HepG2 (cell line): ENCODE measurements at regions of chr11 and their contacts with region 1.

Region 1: GRCh38 chr11:17760102-17761029 is 25.8 kb downstream of the KCNC1 start:
- DNase-seq: peak; percentile 69
- ATAC-seq: peak; percentile 99
- H3K4me3 ChIP-seq: no peak overlapping the region
- H3K27ac ChIP-seq: no peak overlapping the region
- H3K4me1 ChIP-seq: peaks cover 11% of the 10 kb centered on the region; the same call in 1 of the 2 replicates
- H3K27me3 ChIP-seq: peaks cover 3 to 6% of the 10 kb centered on the region in 2 experiments; a peak in 3 of 5 replicates
- CTCF ChIP-seq: peak; percentile 98
- EP300 ChIP-seq: no peak
- POLR2A ChIP-seq: no peak
- RAD21 ChIP-seq: peak; percentile 96

Region 2: DNA sequence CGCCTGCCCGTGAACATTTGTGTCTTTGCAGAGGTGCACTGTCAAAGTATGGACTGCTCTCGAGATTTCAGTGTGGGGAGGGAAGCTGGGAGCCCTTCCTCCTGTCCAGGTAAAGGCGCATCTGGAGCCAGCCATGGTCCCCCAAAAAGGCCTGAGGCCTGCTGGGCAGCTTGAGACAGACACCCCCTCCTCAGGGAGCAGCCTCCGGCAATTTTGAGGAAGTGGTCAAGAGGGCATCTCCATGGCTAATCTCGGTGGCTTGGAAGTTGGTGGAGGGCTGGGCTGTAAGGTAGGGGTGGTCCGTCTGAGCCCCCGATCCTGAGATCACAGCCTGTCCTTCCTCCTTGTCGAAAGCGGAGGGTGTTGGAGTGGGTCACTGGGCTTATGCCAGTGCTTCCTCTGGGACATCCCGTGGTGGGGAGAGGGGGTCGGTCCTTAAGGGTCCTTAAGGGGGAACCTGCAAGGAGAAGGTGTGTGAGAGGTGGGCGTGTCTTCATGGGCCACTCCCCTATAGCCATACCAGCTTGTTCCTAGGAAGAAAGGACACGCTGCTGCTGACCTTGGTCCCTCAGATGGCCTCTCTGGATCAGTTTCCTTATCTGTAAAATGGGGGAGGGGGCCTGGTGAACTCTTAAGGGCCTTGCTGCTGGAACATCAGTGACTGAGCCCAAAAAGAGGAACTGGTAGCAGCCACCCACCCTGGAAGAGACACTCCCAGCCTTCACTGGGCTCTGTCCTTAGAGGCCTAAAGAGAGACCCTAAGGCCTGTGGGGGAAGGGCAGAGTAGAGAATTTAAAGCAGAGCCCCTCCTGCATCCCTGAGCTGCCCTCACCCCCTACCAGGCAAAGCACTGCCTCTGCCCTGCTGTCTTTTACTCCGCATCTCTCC is 23.2 kb before region 1 on chr11:
- CTCF ChIA-PET with region 1: no interaction called
- POLR2A ChIA-PET with region 1: no interaction called
- in situ Hi-C with region 1: no loop called
- intact Hi-C with region 1: no loop called
- DNase-seq: no peak
- ATAC-seq: no peak
- H3K4me3 ChIP-seq: no peak overlapping the region
- H3K27ac ChIP-seq: no peak overlapping the region
- H3K4me1 ChIP-seq: peaks cover 2% of the 10 kb centered on the region
- H3K27me3 ChIP-seq: peaks cover 6 to 38% of the 10 kb centered on the region in 2 experiments; a peak in 3 of 5 replicates
- CTCF ChIP-seq: no peak
- EP300 ChIP-seq: no peak
- POLR2A ChIP-seq: no peak
- RAD21 ChIP-seq: no peak

Region 3: DNA sequence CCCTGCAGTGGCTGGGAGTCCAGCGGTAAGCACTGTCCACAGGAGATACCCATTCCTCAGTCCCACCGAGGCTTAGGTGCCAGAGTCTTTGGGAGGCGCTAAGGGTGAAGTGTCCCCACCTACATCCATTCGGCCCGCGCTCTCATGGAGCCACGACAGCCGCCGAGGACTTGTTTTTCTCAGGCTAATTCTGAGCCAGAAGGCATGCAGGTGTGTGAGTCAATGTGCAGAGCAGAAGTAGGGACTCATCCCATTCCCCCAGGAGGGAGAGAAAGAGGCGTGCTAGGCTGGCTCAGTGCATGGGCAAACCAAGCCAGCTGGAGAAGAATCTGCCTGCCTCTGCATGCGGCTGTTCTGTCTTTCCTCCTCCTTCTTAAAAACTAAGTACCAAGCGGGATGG is 20.9 kb after region 1 on chr11:
- CTCF ChIA-PET with region 1: interaction called, 11 read pairs
- POLR2A ChIA-PET with region 1: no interaction called
- in situ Hi-C with region 1: no loop called
- intact Hi-C with region 1: no loop called
- DNase-seq: no peak
- ATAC-seq: no peak
- H3K4me3 ChIP-seq: no peak overlapping the region
- H3K27ac ChIP-seq: no peak overlapping the region
- H3K4me1 ChIP-seq: no peaks in the 10 kb centered on the region
- H3K27me3 ChIP-seq: peaks cover 0 to 1% of the 10 kb centered on the region in 2 experiments; a peak in 1 of 5 replicates
- CTCF ChIP-seq: no peak
- EP300 ChIP-seq: no peak
- POLR2A ChIP-seq: no peak
- RAD21 ChIP-seq: no peak

Region 4: GRCh38 chr11:17846852-17847453 is 86.6 kb after region 1 on chr11:
- CTCF ChIA-PET with region 1: interaction called, 3 read pairs
- POLR2A ChIA-PET with region 1: no interaction called
- in situ Hi-C with region 1: no loop called
- intact Hi-C with region 1: loop called (anchors 5 kb)
- DNase-seq: no peak
- ATAC-seq: peak; percentile 62
- H3K4me3 ChIP-seq: no peak overlapping the region
- H3K27ac ChIP-seq: no peak overlapping the region
- H3K4me1 ChIP-seq: no peaks in the 10 kb centered on the region
- H3K27me3 ChIP-seq: no peaks in the 10 kb centered on the region
- CTCF ChIP-seq: peak; percentile 39
- EP300 ChIP-seq: no peak
- POLR2A ChIP-seq: no peak
- RAD21 ChIP-seq: no peak

Region 5: GRCh38 chr11:17939542-17939941 is 179.2 kb after region 1 on chr11:
- CTCF ChIA-PET with region 1: no interaction called
- POLR2A ChIA-PET with region 1: no interaction called
- in situ Hi-C with region 1: no loop called
- intact Hi-C with region 1: no loop called
- DNase-seq: no peak
- ATAC-seq: no peak
- H3K4me3 ChIP-seq: no peak overlapping the region
- H3K27ac ChIP-seq: no peak overlapping the region
- H3K4me1 ChIP-seq: peaks cover 2% of the 10 kb centered on the region; the same call in 1 of the 2 replicates
- H3K27me3 ChIP-seq: no peaks in the 10 kb centered on the region
- CTCF ChIP-seq: no peak
- EP300 ChIP-seq: no peak
- POLR2A ChIP-seq: no peak
- RAD21 ChIP-seq: no peak

Region 6: DNA sequence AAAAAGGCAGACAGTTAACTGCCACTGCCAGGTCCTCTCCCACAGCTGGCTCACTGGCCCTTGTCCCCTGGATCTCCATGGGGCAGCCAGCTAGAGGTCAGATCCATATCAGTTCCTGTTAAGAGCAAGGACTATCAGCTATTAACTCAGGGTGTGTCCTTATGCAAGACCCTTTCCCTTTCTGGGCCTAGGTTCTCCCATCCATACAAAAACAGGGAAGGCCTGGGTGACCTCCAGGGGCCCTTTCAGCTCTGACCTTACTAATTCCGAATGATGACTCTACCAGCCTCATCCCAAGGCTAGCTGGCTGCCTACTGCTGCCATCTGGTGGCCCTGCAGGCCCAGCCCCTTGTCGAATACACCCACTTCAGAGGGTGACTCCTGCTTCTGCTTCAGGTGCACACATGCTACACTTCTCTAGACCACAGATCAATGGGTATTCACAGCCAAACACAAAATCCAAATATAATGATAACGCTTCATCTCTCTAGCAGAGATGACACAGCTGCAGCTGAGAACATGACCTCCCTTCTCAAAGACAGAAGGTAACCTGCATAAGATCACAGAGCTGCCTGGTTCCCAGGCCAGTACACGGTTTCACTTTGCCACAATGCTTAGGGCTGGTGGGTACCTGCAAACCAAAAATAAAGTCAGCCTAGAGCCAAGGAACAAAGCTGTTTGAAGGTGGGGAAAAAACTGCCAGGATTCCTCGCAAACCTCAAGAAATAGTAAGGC is 218.4 kb after region 1 on chr11:
- CTCF ChIA-PET with region 1: interaction called, 44 read pairs
- POLR2A ChIA-PET with region 1: no interaction called
- in situ Hi-C with region 1: loop called (anchors 5 kb)
- intact Hi-C with region 1: loop called (anchors 1 kb)
- DNase-seq: peak; percentile 59
- ATAC-seq: peak; percentile 95
- H3K4me3 ChIP-seq: no peak overlapping the region
- H3K27ac ChIP-seq: no peak overlapping the region
- H3K4me1 ChIP-seq: peaks cover 40% of the 10 kb centered on the region
- H3K27me3 ChIP-seq: no peaks in the 10 kb centered on the region
- CTCF ChIP-seq: peak; percentile 90
- EP300 ChIP-seq: no peak
- POLR2A ChIP-seq: no peak
- RAD21 ChIP-seq: peak; percentile 78